K562 (cell line): ENCODE measurements at regions of chr1 and their contacts with region 1.

Region 1: DNA sequence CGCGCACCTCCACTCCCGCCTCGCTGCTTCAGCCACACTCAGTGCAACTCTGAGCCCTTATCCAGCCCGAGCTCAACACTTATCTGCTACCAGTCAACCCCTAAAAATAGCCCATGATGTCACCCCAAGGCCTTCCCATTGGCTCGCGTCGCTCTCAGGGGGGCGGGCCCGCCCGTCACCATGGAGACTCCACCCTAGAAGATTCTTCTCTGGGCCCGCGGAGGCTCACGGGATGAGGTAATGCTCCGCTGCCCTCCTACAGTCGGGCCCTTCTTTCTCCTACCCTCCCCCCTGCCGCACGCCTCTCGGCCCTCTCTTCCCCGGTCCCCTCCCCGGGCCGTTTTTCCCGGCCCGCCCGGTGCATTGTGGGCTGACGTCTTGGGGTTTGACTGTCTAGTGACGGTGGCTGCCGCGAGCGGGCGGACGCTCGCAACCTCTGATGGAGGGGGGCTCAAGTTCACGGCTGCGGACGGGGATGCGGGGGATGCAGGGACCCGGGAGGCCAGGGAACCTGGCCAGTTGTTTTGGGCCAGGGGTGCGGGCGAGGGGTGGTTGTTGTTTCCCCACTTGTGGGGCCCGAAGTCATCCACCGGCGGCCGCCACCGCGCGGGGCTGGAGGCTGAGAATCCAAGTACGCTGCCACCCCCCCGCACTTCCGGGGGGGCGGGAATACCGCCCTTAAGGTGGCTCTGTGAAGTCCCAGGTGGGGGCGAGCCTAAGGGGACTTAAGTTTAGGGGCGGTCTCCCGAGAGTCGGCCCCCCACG is at the start of gene JUN:
- DNase-seq: peak; percentile 96 to 99 (median 98)
- ATAC-seq: peak; percentile 83
- H3K4me3 ChIP-seq: peak within 1 kb of the TSS; percentile 81
- H3K27ac ChIP-seq: peak within 1 kb of the TSS; percentile 96
- H3K4me1 ChIP-seq: peaks cover 9 to 37% of the 10 kb centered on the region in 2 experiments; a peak in 4 of 5 replicates
- H3K27me3 ChIP-seq: no peaks in the 10 kb centered on the region
- CTCF ChIP-seq: no peak; a peak in 1 of 6 replicates
- EP300 ChIP-seq: peak; percentile 39
- POLR2A ChIP-seq: peak; percentile 99
- RAD21 ChIP-seq: peak; percentile 17 to 29; a peak in 1 of 4 replicates
- polyA plus RNA-seq, gene JUN: 0.32 TPM

Region 2: GRCh38 chr1:58611861-58612385 is 172.3 kb before region 1 on chr1:
- CTCF ChIA-PET with region 1: no interaction called
- POLR2A ChIA-PET with region 1: no interaction called
- in situ Hi-C with region 1: no loop called
- intact Hi-C with region 1: no loop called
- DNase-seq: no peak
- ATAC-seq: no peak
- H3K4me3 ChIP-seq: no peak overlapping the region
- H3K27ac ChIP-seq: no peak overlapping the region
- H3K4me1 ChIP-seq: no peaks in the 10 kb centered on the region
- H3K27me3 ChIP-seq: no peaks in the 10 kb centered on the region; a peak in 1 of 5 replicates
- CTCF ChIP-seq: no peak
- EP300 ChIP-seq: no peak
- POLR2A ChIP-seq: no peak
- RAD21 ChIP-seq: no peak

Region 3: GRCh38 chr1:58739856-58740466 is 44.2 kb before region 1 on chr1:
- CTCF ChIA-PET with region 1: interaction called, 6 read pairs
- POLR2A ChIA-PET with region 1: interaction called, 3 read pairs
- in situ Hi-C with region 1: no loop called
- intact Hi-C with region 1: loop called (anchors 5 kb)
- DNase-seq: peak; percentile 44 to 69 (median 58)
- ATAC-seq: peak; percentile 86
- H3K4me3 ChIP-seq: no peak overlapping the region
- H3K27ac ChIP-seq: no peak overlapping the region
- H3K4me1 ChIP-seq: no peaks in the 10 kb centered on the region
- H3K27me3 ChIP-seq: peaks cover 4% of the 10 kb centered on the region in 2 experiments; a peak in 3 of 5 replicates
- CTCF ChIP-seq: peak; percentile 63 to 93 (median 64); a peak in 5 of 6 replicates
- EP300 ChIP-seq: no peak
- POLR2A ChIP-seq: no peak
- RAD21 ChIP-seq: peak; percentile 98

Region 4: GRCh38 chr1:58841455-58841854 is 57.3 kb after region 1 on chr1:
- CTCF ChIA-PET with region 1: no interaction called
- POLR2A ChIA-PET with region 1: interaction called, 3 read pairs
- in situ Hi-C with region 1: no loop called
- intact Hi-C with region 1: loop called (anchors 1 kb)
- DNase-seq: peak; percentile 59 to 76 (median 67)
- ATAC-seq: peak; percentile 96
- H3K4me3 ChIP-seq: no peak overlapping the region
- H3K27ac ChIP-seq: no peak overlapping the region
- H3K4me1 ChIP-seq: peaks cover 0 to 10% of the 10 kb centered on the region in 2 experiments; a peak in 2 of 5 replicates
- H3K27me3 ChIP-seq: no peaks in the 10 kb centered on the region
- CTCF ChIP-seq: peak; percentile 60 to 83 (median 72)
- EP300 ChIP-seq: no peak
- POLR2A ChIP-seq: no peak
- RAD21 ChIP-seq: peak; percentile 48 to 73; a peak in 3 of 4 replicates

Region 5: DNA sequence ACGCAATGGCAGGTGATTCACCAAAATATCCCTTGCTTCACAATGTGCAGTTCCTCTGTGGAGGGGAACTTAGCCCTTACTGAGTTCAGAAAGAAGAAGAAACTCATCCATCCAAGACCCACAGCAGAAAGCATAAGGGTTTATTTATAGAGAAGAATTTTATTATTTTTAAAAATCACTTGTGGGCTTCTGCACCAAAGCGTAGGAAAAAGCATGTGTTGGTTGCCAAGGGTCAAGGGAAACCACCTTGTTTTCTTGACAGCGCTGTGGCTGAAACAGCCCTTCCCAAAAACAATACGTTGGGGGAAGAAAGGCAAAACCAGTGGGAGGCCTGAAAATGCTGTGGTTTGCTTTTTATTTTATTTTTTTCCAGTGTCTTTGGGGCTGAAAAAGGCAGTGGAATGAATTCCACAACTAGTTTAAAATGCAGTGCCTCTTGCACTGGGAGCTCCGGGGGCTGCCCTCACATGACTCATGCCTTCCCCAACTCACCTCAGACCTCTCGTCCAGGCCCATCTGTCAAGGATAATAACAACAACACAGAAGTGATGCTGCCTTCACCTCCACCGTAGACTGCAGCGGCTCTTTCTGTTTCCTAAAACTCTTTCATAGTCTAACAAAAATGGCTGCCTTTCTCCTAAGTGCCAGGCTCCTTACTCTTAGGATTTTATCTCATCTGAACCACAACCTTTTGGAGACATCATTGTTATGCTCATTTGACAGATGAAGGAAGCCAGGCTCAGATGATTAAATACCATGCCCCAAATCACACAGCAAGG is 223.8 kb after region 1 on chr1:
- CTCF ChIA-PET with region 1: no interaction called
- POLR2A ChIA-PET with region 1: interaction called, 3 read pairs
- in situ Hi-C with region 1: no loop called
- intact Hi-C with region 1: loop called (anchors 10 kb)
- DNase-seq: peak in 1 of 4 experiments; percentile 38
- ATAC-seq: peak; percentile 35
- H3K4me3 ChIP-seq: no peak overlapping the region
- H3K27ac ChIP-seq: no peak overlapping the region
- H3K4me1 ChIP-seq: peaks cover 6 to 9% of the 10 kb centered on the region in 2 experiments; a peak in 3 of 5 replicates
- H3K27me3 ChIP-seq: no peaks in the 10 kb centered on the region; a peak in 1 of 5 replicates
- CTCF ChIP-seq: no peak
- EP300 ChIP-seq: no peak
- POLR2A ChIP-seq: no peak
- RAD21 ChIP-seq: no peak

Region 6: GRCh38 chr1:59107516-59107915 is 323.3 kb after region 1 on chr1:
- CTCF ChIA-PET with region 1: no interaction called
- POLR2A ChIA-PET with region 1: interaction called, 5 read pairs
- in situ Hi-C with region 1: no loop called
- intact Hi-C with region 1: loop called (anchors 10 kb)
- DNase-seq: no peak
- ATAC-seq: no peak
- H3K4me3 ChIP-seq: no peak overlapping the region
- H3K27ac ChIP-seq: no peak overlapping the region
- H3K4me1 ChIP-seq: no peaks in the 10 kb centered on the region
- H3K27me3 ChIP-seq: peaks cover 4 to 8% of the 10 kb centered on the region in 2 experiments; a peak in 2 of 5 replicates
- CTCF ChIP-seq: no peak
- EP300 ChIP-seq: no peak
- POLR2A ChIP-seq: no peak
- RAD21 ChIP-seq: no peak

Region 7: GRCh38 chr1:59296358-59297256 is 512.4 kb after region 1 on chr1 and contains the start of gene FGGY:
- CTCF ChIA-PET with region 1: no interaction called
- POLR2A ChIA-PET with region 1: interaction called, 3 read pairs
- in situ Hi-C with region 1: no loop called
- intact Hi-C with region 1: loop called (anchors 5 kb)
- DNase-seq: peak; percentile 90 to 95 (median 92)
- ATAC-seq: peak; percentile 94
- H3K4me3 ChIP-seq: peak within 1 kb of the TSS; percentile 56
- H3K27ac ChIP-seq: peak within 1 kb of the TSS; percentile 86
- H3K4me1 ChIP-seq: peaks cover 9 to 28% of the 10 kb centered on the region in 2 experiments
- H3K27me3 ChIP-seq: no peaks in the 10 kb centered on the region
- CTCF ChIP-seq: 0 out of 6 replicates have a peak, but pooled peaks of 1 of the 3 experiments have one; percentile 2
- EP300 ChIP-seq: no peak
- POLR2A ChIP-seq: peak; percentile 91
- RAD21 ChIP-seq: peak; percentile 6 to 10; a peak in 2 of 4 replicates
- polyA plus RNA-seq, gene FGGY: 12.6 to 15.4 TPM